Right lobe of liver (tissue), 6 donors: ENCODE measurements at regions of chr22 and their contacts with region 1.

Region 1: GRCh38 chr22:45101515-45102227 is 62.1 kb upstream of the NUP50 start:
- DNase-seq: peak; percentile 62 to 77 (median 70)
- ATAC-seq: peak; percentile 54 to 95 (median 86)
- H3K4me3 ChIP-seq: no peak overlapping the region
- H3K27ac ChIP-seq: no peak overlapping the region
- H3K4me1 ChIP-seq: no peaks in the 10 kb centered on the region
- H3K27me3 ChIP-seq: no peaks in the 10 kb centered on the region
- CTCF ChIP-seq: peak; percentile 44 to 60 (median 55)
- POLR2A ChIP-seq: no peak

Region 2: DNA sequence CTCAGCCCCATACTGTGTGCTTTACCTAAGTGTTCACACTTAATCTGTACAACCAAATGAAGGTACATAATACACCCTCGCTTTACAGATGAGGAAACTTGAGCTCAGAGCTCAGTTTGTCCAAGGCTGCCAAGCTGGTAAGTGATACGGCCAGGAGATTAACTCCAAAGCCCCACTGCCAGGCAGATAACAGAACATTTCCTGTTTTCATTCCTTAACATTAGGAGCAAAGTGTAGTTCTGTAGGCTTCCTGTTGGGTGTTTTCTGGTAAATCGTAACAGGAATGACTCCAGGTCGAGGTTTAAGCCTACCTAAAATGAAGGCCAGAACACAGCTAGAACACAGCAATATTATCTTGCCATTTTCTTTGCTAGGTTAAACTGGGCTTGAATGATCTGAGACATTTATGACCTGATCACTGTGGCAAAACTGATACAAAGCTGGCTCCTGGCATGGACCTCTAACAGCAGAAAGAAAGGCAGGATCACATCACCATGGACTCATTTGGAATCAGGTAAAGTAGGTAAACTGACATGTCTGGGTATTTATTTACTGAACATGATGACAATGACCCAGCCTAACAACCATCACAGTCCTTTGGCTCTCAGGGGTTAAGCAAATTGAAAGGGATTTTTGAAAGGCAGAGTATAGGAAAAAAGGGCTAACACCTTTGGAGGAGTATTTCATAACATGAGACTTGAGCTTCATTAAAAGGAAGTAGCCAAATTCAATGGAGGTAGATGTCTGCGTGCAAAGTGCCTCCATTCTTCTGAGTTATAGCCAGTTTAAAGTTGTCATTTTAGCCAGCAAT is 58.2 kb after region 1 on chr22:
- intact Hi-C with region 1: loop called in 1 of 2 experiments (anchors 10 kb)
- DNase-seq: peak in 1 of 3 donors; percentile 33
- ATAC-seq: peak; percentile 35 to 58 (median 45)
- H3K4me3 ChIP-seq: no peak overlapping the region
- H3K27ac ChIP-seq: peak overlapping the region; percentile 78 to 96 (median 92)
- H3K4me1 ChIP-seq: peaks cover 0 to 41% (median 16%) of the 10 kb centered on the region in 4 donors
- H3K27me3 ChIP-seq: no peaks in the 10 kb centered on the region
- CTCF ChIP-seq: peak in 2 of 4 donors; percentile 12 to 43
- POLR2A ChIP-seq: peak; percentile 27

Region 3: GRCh38 chr22:45254789-45255278 is 153.2 kb after region 1 on chr22:
- intact Hi-C with region 1: loop called (anchors 5 to 10 kb)
- DNase-seq: no peak
- ATAC-seq: no peak
- H3K4me3 ChIP-seq: no peak overlapping the region
- H3K27ac ChIP-seq: no peak overlapping the region
- H3K4me1 ChIP-seq: no peaks in the 10 kb centered on the region
- H3K27me3 ChIP-seq: no peaks in the 10 kb centered on the region
- CTCF ChIP-seq: no peak
- POLR2A ChIP-seq: no peak

Region 4: GRCh38 chr22:45263463-45264269 is 162.0 kb after region 1 on chr22:
- intact Hi-C with region 1: loop called (anchors 5 to 10 kb)
- DNase-seq: peak; percentile 86 to 89 (median 87)
- ATAC-seq: peak; percentile 98 to 99 (median 98)
- H3K4me3 ChIP-seq: no peak overlapping the region
- H3K27ac ChIP-seq: peak overlapping the region in 2 of 3 donors; percentile 9 to 53
- H3K4me1 ChIP-seq: peaks cover 0 to 6% (median 0%) of the 10 kb centered on the region in 4 donors
- H3K27me3 ChIP-seq: no peaks in the 10 kb centered on the region
- CTCF ChIP-seq: peak; percentile 82 to 92 (median 84)
- POLR2A ChIP-seq: no peak